ENCODE measurements at regions of chr16 and their contacts with region 1.

Region 1: GRCh38 chr16:50368410-50369132 is at the start of gene BRD7:
- DNase-seq: no peak
- H3K4me3 ChIP-seq: peak within 1 kb of the TSS; percentile 80 to 100 (median 92)
- H3K27ac ChIP-seq: peak within 1 kb of the TSS; percentile 78 to 85 (median 81)
- H3K4me1 ChIP-seq: peaks cover 0 to 61% (median 40%) of the 10 kb centered on the region in 4 donors
- H3K27me3 ChIP-seq: no peaks in the 10 kb centered on the region
- CTCF ChIP-seq: peak in 1 of 4 experiments; percentile 64
- EP300 ChIP-seq: no peak
- POLR2A ChIP-seq: no peak
- total RNA-seq, gene BRD7: 52.0 to 56.4 (median 53.7) TPM

Region 2: GRCh38 chr16:50152807-50153452 is 215.6 kb before region 1 on chr16 and contains the start of gene TENT4B:
- intact Hi-C with region 1: loop called (anchors 10 kb)
- DNase-seq: peak; percentile 94
- H3K4me3 ChIP-seq: peak within 1 kb of the TSS; percentile 93 to 98 (median 96)
- H3K27ac ChIP-seq: peak within 1 kb of the TSS; percentile 89 to 96 (median 94)
- H3K4me1 ChIP-seq: peaks cover 0 to 41% (median 29%) of the 10 kb centered on the region in 4 donors
- H3K27me3 ChIP-seq: no peaks in the 10 kb centered on the region
- CTCF ChIP-seq: no peak
- EP300 ChIP-seq: no peak
- POLR2A ChIP-seq: peak; percentile 50 to 66
- total RNA-seq, gene TENT4B: 14.9 to 23.5 (median 20.0) TPM

Region 3: DNA sequence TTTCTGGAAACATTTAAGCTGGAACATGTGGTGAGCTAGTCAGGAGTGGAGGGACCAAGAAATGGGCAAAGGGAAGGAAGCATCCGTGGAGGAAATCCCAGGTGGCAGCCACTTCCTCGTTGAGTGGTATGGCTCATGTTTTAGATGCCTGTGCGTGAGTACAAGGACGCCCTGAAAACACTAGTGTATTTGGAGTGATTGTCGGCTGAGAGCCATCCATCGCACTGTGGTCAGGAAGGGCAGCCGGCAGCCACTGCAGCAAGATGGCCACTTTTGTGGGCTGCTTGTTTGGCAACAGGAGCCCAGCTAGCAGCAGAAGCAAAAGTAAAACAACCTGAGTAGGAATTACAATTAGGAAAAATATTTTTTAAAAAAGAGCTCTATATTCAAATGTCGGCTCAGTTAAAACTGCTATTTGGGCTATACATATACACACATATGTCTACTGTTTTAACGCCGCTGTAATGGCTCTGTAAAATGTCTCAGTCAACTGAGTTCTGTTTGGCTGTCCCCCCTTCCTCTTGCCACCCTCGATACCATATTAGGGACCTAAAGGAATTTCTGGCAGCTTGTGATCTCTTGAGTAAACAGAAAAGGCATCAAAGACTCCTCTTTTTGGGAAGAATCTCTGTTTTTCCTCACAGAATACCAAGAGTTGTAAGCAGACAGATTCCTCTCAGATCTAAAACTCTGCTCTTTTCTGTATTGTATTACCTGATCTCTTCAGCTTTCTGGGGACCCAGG is 39.0 kb before region 1 on chr16:
- intact Hi-C with region 1: loop called (anchors 5 kb)
- DNase-seq: no peak
- H3K4me3 ChIP-seq: peak overlapping the region in 1 of 4 donors; percentile 9
- H3K27ac ChIP-seq: peak overlapping the region; percentile 67 to 82 (median 78)
- H3K4me1 ChIP-seq: peaks cover 0 to 52% (median 31%) of the 10 kb centered on the region in 4 donors
- H3K27me3 ChIP-seq: no peaks in the 10 kb centered on the region
- CTCF ChIP-seq: no peak
- EP300 ChIP-seq: no peak
- POLR2A ChIP-seq: no peak

Region 4: GRCh38 chr16:50627419-50627818 is 258.8 kb after region 1 on chr16:
- intact Hi-C with region 1: loop called (anchors 2 kb)
- DNase-seq: peak; percentile 91
- H3K4me3 ChIP-seq: no peak overlapping the region
- H3K27ac ChIP-seq: peak overlapping the region; percentile 46 to 64 (median 60)
- H3K4me1 ChIP-seq: peaks cover 0 to 32% (median 26%) of the 10 kb centered on the region in 4 donors
- H3K27me3 ChIP-seq: no peaks in the 10 kb centered on the region
- CTCF ChIP-seq: peak; percentile 54 to 81 (median 66)
- EP300 ChIP-seq: no peak
- POLR2A ChIP-seq: no peak

Region 5: DNA sequence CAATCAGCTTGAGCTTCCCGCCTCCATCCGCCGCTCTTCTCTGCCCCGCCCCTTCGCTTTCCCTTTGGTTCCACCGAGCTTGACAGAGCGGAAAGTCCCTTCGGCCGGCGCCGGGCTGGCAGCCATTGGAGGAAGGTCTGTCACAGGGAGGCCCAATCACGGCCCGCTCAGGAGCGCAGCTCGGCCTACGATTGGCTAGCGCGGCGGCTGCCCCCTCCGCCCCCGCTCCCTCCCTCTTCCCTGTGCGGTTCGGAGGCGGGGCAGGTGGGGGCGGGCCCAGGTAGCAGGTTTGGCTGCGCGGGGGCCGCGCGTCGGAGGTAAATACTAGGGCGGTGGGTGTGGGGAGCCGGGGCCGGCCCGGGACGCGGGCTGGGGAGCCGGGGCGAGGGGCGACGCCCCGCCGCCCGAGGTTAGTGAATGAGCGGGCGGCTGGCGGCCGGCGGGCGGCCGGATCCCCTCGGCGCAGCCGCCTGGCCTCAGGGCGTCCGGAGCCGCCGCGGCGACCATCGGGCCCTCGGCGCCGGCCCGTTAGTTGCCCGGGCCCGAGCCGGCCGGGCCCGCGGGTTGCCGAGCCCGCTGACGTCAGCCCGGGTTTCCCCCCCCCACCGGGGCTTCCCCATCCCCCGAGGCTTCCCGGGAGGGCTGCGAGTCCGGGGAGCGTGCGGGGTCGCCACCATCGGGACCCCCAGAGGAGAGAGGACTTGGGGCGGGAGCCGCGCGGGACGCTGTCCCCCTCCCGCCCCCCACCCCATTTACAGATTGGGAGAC is 373.4 kb after region 1 on chr16 and contains the start of gene CYLD:
- intact Hi-C with region 1: loop called (anchors 5 kb)
- DNase-seq: peak; percentile 100
- H3K4me3 ChIP-seq: peak within 1 kb of the TSS; percentile 68 to 99 (median 95)
- H3K27ac ChIP-seq: peak within 1 kb of the TSS; percentile 88 to 95 (median 92)
- H3K4me1 ChIP-seq: peaks cover 0 to 42% (median 32%) of the 10 kb centered on the region in 4 donors
- H3K27me3 ChIP-seq: no peaks in the 10 kb centered on the region
- CTCF ChIP-seq: no peak
- EP300 ChIP-seq: no peak
- POLR2A ChIP-seq: peak in 1 of 2 donors; percentile 29
- total RNA-seq, gene CYLD: 29.6 to 45.3 (median 38.5) TPM

Measured in sigmoid colon (tissue), 7 donors.